CD4-positive, alpha-beta T cell (primary cell): ENCODE measurements at regions of chr7 and their contacts with region 1.

Region 1: DNA sequence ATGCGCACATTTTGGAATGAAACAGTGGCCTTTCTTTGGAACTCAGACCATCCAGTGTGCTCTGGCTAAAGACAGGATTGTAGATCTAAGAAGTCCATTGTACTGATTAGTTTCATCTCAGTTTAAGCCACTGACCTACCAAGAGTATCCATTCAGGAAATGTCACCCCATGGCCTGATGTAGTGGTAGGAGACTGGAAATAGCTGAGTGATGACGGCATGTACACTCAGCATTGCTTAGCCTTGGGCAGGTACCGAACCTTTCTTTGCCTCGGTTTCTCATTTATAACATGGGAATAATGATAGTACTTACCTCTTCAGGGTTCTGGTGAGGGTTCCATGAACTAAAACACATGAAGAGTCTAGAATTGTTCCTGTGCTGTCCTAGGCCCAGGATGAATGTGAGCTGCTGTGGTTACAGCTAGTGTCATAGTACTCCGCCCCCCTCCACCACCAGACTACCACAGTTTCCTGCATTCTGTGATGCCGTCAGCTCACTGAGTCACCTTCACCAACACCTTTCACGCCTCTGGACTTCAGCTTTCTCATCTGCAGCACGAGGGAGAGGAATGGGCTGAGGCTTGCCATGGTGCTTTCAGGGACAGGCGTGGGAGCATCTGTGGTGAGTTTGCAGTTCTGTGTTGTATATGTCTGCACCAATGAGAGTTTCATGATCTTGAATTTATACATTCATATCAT is 484.0 kb upstream of the GALNT17 start:
- DNase-seq: peak; percentile 23 to 93 (median 60)
- ATAC-seq: peak; percentile 91
- H3K4me3 ChIP-seq: peak overlapping the region; percentile 9
- H3K4me3 Mint-ChIP-seq: peak overlapping the region; percentile 47
- H3K27ac ChIP-seq: no peak overlapping the region
- H3K27ac Mint-ChIP-seq: peak overlapping the region; percentile 82
- H3K4me1 ChIP-seq: peaks cover 37% of the 10 kb centered on the region
- H3K4me1 Mint-ChIP-seq: peaks cover 18% of the 10 kb centered on the region
- H3K27me3 ChIP-seq: no peaks in the 10 kb centered on the region
- H3K27me3 Mint-ChIP-seq: no peaks in the 10 kb centered on the region
- CTCF ChIP-seq: no peak

Region 2: DNA sequence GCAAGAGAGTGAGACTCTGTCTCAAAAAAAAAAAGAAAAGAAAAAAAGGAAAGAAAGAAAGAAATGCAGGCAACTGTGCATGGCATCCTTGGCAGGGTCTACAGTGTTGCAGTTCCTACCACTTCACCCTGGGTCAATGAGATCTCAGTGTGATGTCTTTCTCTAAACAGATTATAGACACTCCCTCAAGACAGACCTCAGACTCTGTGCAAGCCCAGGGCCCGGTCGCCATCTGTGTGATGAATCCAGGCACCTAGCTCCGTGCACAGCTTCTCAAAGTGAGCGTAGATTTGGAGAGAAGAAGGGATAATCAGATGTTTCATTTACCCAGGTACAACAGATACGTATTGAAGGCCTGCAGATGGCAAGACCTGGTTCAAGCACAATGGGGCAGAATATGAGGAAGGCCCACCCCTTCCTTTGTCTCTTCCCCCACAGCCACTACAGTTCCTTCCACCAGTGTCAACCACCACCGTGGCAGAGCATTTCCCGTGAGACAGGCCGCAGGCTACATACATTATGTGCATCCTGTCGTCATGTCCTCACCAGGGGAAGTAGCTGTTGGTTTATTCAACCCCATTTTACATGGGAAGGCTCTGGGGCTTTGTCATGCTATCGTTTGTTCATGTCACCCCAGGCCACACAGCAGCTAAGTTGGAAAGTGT is 12.3 kb after region 1 on chr7:
- CTCF ChIA-PET with region 1: no interaction called
- POLR2A ChIA-PET with region 1: interaction called, 22 read pairs
- intact Hi-C with region 1: loop called in 1 of 2 experiments (anchors 1 kb)
- DNase-seq: peak in 11 of 14 experiments; percentile 8 to 85 (median 37)
- ATAC-seq: peak; percentile 84
- H3K4me3 ChIP-seq: no peak overlapping the region
- H3K4me3 Mint-ChIP-seq: no peak overlapping the region
- H3K27ac ChIP-seq: no peak overlapping the region
- H3K27ac Mint-ChIP-seq: peak overlapping the region; percentile 55
- H3K4me1 ChIP-seq: peaks cover 26% of the 10 kb centered on the region
- H3K4me1 Mint-ChIP-seq: peaks cover 33% of the 10 kb centered on the region
- H3K27me3 ChIP-seq: no peaks in the 10 kb centered on the region
- H3K27me3 Mint-ChIP-seq: no peaks in the 10 kb centered on the region
- CTCF ChIP-seq: no peak

Region 3: DNA sequence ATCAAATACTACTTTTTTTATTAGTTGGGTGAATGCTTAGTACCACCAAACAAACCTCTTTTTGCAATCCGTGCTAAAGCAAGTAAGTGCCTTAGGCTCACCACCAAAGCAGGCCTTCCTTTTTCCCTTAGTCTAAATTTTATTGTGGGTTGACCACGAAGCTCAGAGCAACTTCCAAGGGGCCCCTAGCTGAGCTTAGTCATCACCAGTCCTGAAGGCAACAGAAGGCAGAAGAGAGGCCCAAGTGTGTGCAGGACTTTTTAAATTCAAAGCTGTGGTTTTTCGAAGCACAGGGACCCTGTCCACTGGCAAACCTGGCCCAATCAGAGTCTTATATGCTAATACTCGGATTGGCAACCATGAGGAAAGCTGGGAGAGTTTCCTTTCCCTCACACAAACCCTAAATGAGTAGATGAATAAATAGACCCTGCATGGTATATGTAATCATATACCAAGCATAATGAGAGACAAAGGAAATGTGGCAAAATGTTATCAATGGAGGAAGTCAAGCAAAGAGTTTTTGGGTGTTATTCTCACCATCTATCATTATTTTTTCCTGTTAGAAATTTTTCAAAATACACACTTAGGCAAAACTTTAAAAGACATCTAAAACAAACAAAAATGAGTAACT is 30.8 kb after region 1 on chr7:
- CTCF ChIA-PET with region 1: no interaction called
- POLR2A ChIA-PET with region 1: interaction called, 4 read pairs
- intact Hi-C with region 1: loop called in 1 of 2 experiments (anchors 1 kb)
- DNase-seq: peak in 1 of 14 experiments; percentile 22
- ATAC-seq: peak; percentile 28
- H3K4me3 ChIP-seq: no peak overlapping the region
- H3K4me3 Mint-ChIP-seq: peak overlapping the region; percentile 17
- H3K27ac ChIP-seq: no peak overlapping the region
- H3K27ac Mint-ChIP-seq: peak overlapping the region; percentile 81
- H3K4me1 ChIP-seq: peaks cover 17% of the 10 kb centered on the region
- H3K4me1 Mint-ChIP-seq: peaks cover 36% of the 10 kb centered on the region
- H3K27me3 ChIP-seq: no peaks in the 10 kb centered on the region
- H3K27me3 Mint-ChIP-seq: no peaks in the 10 kb centered on the region
- CTCF ChIP-seq: no peak